AG04450 (cell line): ENCODE measurements at regions of chr7 and their contacts with region 1.

Region 1: DNA sequence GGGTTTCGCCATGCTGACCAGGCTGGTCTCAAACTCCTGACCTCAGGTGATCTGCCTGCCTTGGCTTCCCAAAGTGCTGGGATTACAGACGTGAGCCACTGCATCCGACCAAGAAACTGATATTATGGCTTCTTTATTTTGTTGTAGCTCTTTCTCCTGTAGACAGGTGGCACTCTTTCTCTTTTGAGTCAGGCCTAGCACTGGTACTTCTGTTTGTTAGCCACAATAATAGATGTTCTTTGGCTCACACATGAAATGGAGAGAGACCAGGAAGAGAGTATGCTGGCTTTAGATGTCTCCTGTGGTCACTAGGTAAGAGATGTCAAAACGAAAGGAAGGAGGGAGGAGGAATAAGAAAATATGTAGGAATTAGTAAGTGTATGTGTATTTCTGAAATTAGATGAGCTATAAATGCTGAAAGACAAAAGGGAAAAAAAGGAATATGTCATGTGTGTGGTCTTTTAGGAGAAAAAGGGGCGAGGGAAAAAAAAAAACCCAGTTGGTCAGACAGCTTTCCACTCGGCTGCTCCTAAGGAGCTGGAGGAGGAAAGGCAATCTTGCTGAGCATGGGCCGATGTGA is 78.7 kb downstream of the CLEC2L start:
- DNase-seq: no peak
- H3K4me3 ChIP-seq: no peak overlapping the region
- H3K27ac ChIP-seq: no peak overlapping the region
- H3K27me3 ChIP-seq: no peaks in the 10 kb centered on the region
- CTCF ChIP-seq: peak; percentile 60

Region 2: GRCh38 chr7:139588632-139589031 is 13.6 kb before region 1 on chr7:
- CTCF ChIA-PET with region 1: interaction called, 51 read pairs
- POLR2A ChIA-PET with region 1: no interaction called
- DNase-seq: peak; percentile 72
- H3K4me3 ChIP-seq: no peak overlapping the region
- H3K27ac ChIP-seq: peak overlapping the region; percentile 61
- H3K27me3 ChIP-seq: no peaks in the 10 kb centered on the region
- CTCF ChIP-seq: no peak

Region 3: DNA sequence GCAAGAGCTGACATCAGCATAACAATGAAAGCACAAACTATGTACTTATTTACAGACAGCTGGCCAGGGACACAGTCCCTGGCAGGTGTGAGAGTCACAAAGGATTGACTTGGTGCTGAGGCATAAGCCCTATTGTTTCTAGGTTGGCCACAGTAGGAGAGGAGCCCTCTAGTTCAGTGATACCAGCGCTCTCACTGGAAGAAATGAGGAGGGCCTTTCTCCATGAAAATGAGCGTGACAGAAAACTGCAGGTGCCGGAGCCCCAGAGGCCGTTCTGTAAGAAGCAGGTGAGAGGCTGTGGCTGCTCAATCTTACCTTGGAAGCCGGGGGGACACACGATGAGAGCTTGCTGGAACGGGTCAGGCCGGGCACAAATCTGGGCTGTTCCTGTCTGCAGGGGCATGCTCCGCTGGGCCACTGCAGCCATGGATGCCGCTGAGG is 11.8 kb after region 1 on chr7:
- CTCF ChIA-PET with region 1: interaction called, 40 read pairs
- POLR2A ChIA-PET with region 1: interaction called, 3 read pairs
- DNase-seq: no peak
- H3K4me3 ChIP-seq: no peak overlapping the region
- H3K27ac ChIP-seq: no peak overlapping the region
- H3K27me3 ChIP-seq: no peaks in the 10 kb centered on the region
- CTCF ChIP-seq: no peak

Region 4: GRCh38 chr7:139620676-139621344 is 18.6 kb after region 1 on chr7:
- CTCF ChIA-PET with region 1: interaction called, 40 read pairs
- POLR2A ChIA-PET with region 1: interaction called, 3 read pairs
- DNase-seq: no peak
- H3K4me3 ChIP-seq: no peak overlapping the region
- H3K27ac ChIP-seq: no peak overlapping the region
- H3K27me3 ChIP-seq: no peaks in the 10 kb centered on the region
- CTCF ChIP-seq: peak; percentile 65

Region 5: GRCh38 chr7:140003913-140004382 is 401.7 kb after region 1 on chr7:
- CTCF ChIA-PET with region 1: interaction called, 26 read pairs
- POLR2A ChIA-PET with region 1: no interaction called
- DNase-seq: peak; percentile 56
- H3K4me3 ChIP-seq: no peak overlapping the region
- H3K27ac ChIP-seq: no peak overlapping the region
- H3K27me3 ChIP-seq: no peaks in the 10 kb centered on the region
- CTCF ChIP-seq: peak; percentile 71